Esophagus squamous epithelium (tissue), 5 donors: ENCODE measurements at regions of chrX and their contacts with region 1.

Region 1: GRCh38 chrX:15468036-15468435 is 25.1 kb downstream of the PIR start:
- DNase-seq: no peak
- H3K4me3 ChIP-seq: no peak overlapping the region
- H3K27ac ChIP-seq: peak overlapping the region in 2 of 4 donors; percentile 36 to 45
- H3K4me1 ChIP-seq: peaks cover 0 to 15% (median 0%) of the 10 kb centered on the region in 3 donors
- H3K27me3 ChIP-seq: no peaks in the 10 kb centered on the region
- CTCF ChIP-seq: peak in 3 of 6 experiments; percentile 16 to 49 (median 23)
- POLR2A ChIP-seq: no peak

Region 2: DNA sequence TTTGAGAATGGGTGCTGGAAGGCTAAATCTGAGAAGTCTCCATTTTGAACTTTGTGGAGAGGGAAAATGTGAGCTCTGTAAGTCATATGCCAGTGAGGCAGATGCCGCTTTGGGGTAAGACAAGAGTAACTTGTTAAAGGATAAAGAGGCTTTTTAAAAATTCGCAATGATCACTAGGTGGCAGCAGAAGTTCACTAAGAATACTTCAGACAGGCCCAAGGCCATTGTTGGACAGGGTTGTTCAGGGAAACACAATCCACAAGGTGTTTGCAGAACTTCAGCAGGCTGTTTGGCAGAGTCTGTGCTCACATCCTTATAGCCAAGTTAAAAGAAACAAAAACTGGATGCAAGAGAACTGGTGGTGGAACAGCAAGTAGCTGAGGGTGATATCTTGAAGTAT is 119.0 kb before region 1 on chrX:
- intact Hi-C with region 1: loop called (anchors 5 kb)
- DNase-seq: no peak
- H3K4me3 ChIP-seq: no peak overlapping the region
- H3K27ac ChIP-seq: no peak overlapping the region
- H3K4me1 ChIP-seq: no peaks in the 10 kb centered on the region
- H3K27me3 ChIP-seq: no peaks in the 10 kb centered on the region
- CTCF ChIP-seq: peak in 5 of 6 experiments; percentile 29 to 51 (median 41)
- POLR2A ChIP-seq: no peak